Activated T-helper 2 cell treated with anti-CD3 and anti-CD28 coated beads, Interferon-gamma antibody, Interleukin-2, Interleukin-4, amounts not matched to agents 10 μg/mL and 5 μg/mL and 100 μg/mL, durations not matched to agents 14 hours and 24 hours and 36 hours (primary cell): ENCODE measurements at regions of chr4 and their contacts with region 1.

Region 1: DNA sequence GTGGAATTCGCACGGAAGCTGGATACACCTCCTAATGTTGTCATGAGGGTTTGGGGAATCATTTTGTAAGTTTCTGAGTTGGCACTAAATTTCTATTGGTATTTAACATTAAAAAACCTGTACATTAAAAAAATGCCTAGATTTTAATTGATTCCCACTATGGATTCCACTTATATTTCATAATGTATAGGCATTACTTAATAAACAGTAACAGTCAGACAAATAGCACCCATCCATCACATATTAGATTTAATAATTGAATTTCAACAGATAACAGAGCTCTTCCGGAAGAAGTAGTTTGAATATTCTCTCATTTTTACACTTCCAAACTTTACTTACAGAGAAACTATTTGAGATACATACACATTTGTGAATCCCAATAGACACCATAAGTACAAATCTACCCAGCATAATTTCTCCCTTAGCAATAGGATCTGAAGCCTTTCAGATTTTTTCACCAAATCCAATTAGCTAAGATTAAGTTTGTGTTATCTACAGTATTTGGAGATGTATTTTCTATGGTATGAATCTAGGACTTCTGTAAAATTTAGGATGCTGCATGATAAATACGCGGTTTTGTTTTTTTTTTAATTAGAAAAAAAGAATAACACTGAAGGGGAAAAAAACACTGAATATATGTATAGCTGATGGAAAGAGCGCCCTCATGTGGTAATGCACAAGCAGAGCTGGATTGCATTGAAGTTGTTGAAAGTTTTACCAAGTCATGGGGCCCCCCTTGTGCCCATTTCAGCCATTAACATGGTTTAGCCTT is 12.2 kb upstream of the ODAM start:
- DNase-seq: no peak
- H3K4me3 Mint-ChIP-seq: no peak overlapping the region
- H3K27ac Mint-ChIP-seq: no peak overlapping the region
- H3K4me1 Mint-ChIP-seq: no peaks in the 10 kb centered on the region
- H3K27me3 Mint-ChIP-seq: no peaks in the 10 kb centered on the region

Region 2: GRCh38 chr4:69322055-69322454 is 861.3 kb before region 1 on chr4:
- intact Hi-C with region 1: loop called (anchors 10 kb)
- DNase-seq: no peak
- H3K4me3 Mint-ChIP-seq: no peak overlapping the region
- H3K27ac Mint-ChIP-seq: no peak overlapping the region
- H3K4me1 Mint-ChIP-seq: no peaks in the 10 kb centered on the region
- H3K27me3 Mint-ChIP-seq: no peaks in the 10 kb centered on the region

Region 3: GRCh38 chr4:69896530-69897116 is 286.7 kb before region 1 on chr4:
- intact Hi-C with region 1: loop called (anchors 5 kb)
- DNase-seq: no peak
- H3K4me3 Mint-ChIP-seq: no peak overlapping the region
- H3K27ac Mint-ChIP-seq: no peak overlapping the region
- H3K4me1 Mint-ChIP-seq: no peaks in the 10 kb centered on the region
- H3K27me3 Mint-ChIP-seq: peaks cover 1% of the 10 kb centered on the region

Region 4: GRCh38 chr4:70522576-70522975 is 339.2 kb after region 1 on chr4:
- intact Hi-C with region 1: no loop called
- DNase-seq: no peak
- H3K4me3 Mint-ChIP-seq: no peak overlapping the region
- H3K27ac Mint-ChIP-seq: no peak overlapping the region
- H3K4me1 Mint-ChIP-seq: no peaks in the 10 kb centered on the region
- H3K27me3 Mint-ChIP-seq: peaks cover 4% of the 10 kb centered on the region